ENCODE measurements at regions of chr6 and their contacts with region 1.

Region 1: DNA sequence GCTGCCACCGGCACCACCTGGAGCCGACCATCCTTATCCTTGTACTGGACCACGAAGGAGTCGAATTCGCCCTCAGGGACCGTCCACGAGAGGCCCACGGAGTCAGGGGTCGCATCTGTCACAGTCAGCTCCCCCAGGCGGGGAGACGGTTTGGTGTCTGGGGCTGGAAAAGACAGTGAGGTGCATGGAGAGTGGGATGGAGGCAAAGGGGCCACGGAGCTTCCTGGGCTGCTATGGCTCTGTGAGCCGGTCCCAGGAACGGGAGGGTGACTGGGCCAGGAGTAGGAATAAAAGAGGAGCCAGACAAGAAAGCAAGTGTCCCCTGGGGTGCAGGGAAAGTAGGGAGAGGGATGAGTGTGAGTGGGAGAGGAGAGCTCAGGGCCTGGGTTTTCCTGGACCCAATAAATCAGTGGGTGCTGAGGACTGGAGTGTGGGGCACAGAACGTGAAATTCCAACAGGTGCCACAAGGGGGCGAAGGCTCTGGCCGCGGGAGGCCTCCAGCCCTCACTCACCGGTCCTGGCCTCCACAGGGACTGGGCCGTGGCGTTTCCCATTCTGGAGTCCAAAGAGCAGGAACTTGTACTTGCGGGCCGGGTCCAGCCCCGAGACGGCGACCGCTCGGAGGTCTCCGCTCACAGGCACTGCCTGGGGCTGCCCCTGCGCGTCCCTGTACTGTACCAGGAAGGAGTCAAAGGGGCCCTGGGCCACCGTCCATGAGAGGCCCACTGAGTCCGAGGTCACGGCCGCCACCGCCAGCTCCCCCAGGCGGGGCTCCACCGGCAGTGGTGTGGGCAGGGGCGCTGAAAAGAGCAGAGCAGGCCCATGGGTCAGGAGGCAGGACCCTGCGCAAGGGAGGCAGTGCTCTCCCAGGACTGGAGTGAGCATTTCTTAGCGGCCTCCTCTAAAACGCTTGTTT is 9.9 kb downstream of the CYP21A2 start:
- DNase-seq: peak; percentile 39
- H3K4me3 ChIP-seq: no peak overlapping the region
- H3K27ac ChIP-seq: no peak overlapping the region
- H3K4me1 ChIP-seq: peaks cover 10% of the 10 kb centered on the region
- H3K27me3 ChIP-seq: peaks cover 0 to 3% of the 10 kb centered on the region in 2 experiments
- CTCF ChIP-seq: peak; percentile 64 to 91
- POLR2A ChIP-seq: no peak

Region 2: GRCh38 chr6:31922942-31923341 is 125.2 kb before region 1 on chr6:
- CTCF ChIA-PET with region 1: no interaction called
- POLR2A ChIA-PET with region 1: no interaction called
- dilution Hi-C with region 1: no loop called
- intact Hi-C with region 1: no loop called
- DNase-seq: no peak
- H3K4me3 ChIP-seq: no peak overlapping the region
- H3K27ac ChIP-seq: no peak overlapping the region
- H3K4me1 ChIP-seq: no peaks in the 10 kb centered on the region
- H3K27me3 ChIP-seq: peaks cover 5 to 8% of the 10 kb centered on the region in 2 experiments
- CTCF ChIP-seq: peak in 1 of 2 donors; percentile 5
- POLR2A ChIP-seq: no peak

Region 3: GRCh38 chr6:32064706-32065105 is 16.6 kb after region 1 on chr6:
- CTCF ChIA-PET with region 1: interaction called, 10 read pairs
- POLR2A ChIA-PET with region 1: no interaction called
- dilution Hi-C with region 1: no loop called
- intact Hi-C with region 1: no loop called
- DNase-seq: no peak
- H3K4me3 ChIP-seq: no peak overlapping the region
- H3K27ac ChIP-seq: no peak overlapping the region
- H3K4me1 ChIP-seq: no peaks in the 10 kb centered on the region
- H3K27me3 ChIP-seq: no peaks in the 10 kb centered on the region
- CTCF ChIP-seq: no peak
- POLR2A ChIP-seq: no peak

Region 4: GRCh38 chr6:32327103-32327502 is 279.0 kb after region 1 on chr6:
- CTCF ChIA-PET with region 1: no interaction called
- POLR2A ChIA-PET with region 1: no interaction called
- dilution Hi-C with region 1: no loop called
- intact Hi-C with region 1: no loop called
- DNase-seq: no peak
- H3K4me3 ChIP-seq: no peak overlapping the region
- H3K27ac ChIP-seq: no peak overlapping the region
- H3K4me1 ChIP-seq: no peaks in the 10 kb centered on the region
- H3K27me3 ChIP-seq: peaks cover 15 to 18% of the 10 kb centered on the region in 2 experiments
- CTCF ChIP-seq: no peak
- POLR2A ChIP-seq: no peak